Activated CD4-positive, alpha-beta T cell treated with anti-CD3 and anti-CD28 coated beads for 36 hours (primary cell): ENCODE measurements at regions of chr19 and their contacts with region 1.

Region 1: GRCh38 chr19:19663256-19664038 is at the start of gene ATP13A1:
- DNase-seq: peak; percentile 95
- ATAC-seq: peak; percentile 77
- H3K4me3 Mint-ChIP-seq: peak within 1 kb of the TSS; percentile 78
- H3K27ac Mint-ChIP-seq: peak within 1 kb of the TSS; percentile 98
- H3K4me1 Mint-ChIP-seq: peaks cover 35% of the 10 kb centered on the region
- H3K27me3 Mint-ChIP-seq: no peaks in the 10 kb centered on the region
- total RNA-seq, gene ATP13A1: 61.8 to 71.2 TPM

Region 2: GRCh38 chr19:19214892-19215291 is 448.6 kb before region 1 on chr19:
- CTCF ChIA-PET with region 1: no interaction called
- POLR2A ChIA-PET with region 1: no interaction called
- intact Hi-C with region 1: no loop called
- DNase-seq: peak; percentile 65
- ATAC-seq: peak; percentile 42
- H3K4me3 Mint-ChIP-seq: no peak overlapping the region
- H3K27ac Mint-ChIP-seq: no peak overlapping the region
- H3K4me1 Mint-ChIP-seq: peaks cover 2% of the 10 kb centered on the region
- H3K27me3 Mint-ChIP-seq: peaks cover 44% of the 10 kb centered on the region

Region 3: GRCh38 chr19:19404879-19405860 is 258.3 kb before region 1 on chr19 and contains the start of gene GATAD2A:
- CTCF ChIA-PET with region 1: no interaction called
- POLR2A ChIA-PET with region 1: no interaction called
- intact Hi-C with region 1: loop called in 1 of 2 experiments (anchors 5 kb)
- DNase-seq: peak; percentile 96
- ATAC-seq: peak; percentile 74
- H3K4me3 Mint-ChIP-seq: peak within 1 kb of the TSS; percentile 91
- H3K27ac Mint-ChIP-seq: peak within 1 kb of the TSS; percentile 95
- H3K4me1 Mint-ChIP-seq: peaks cover 69% of the 10 kb centered on the region
- H3K27me3 Mint-ChIP-seq: no peaks in the 10 kb centered on the region
- total RNA-seq, gene GATAD2A: 123 to 139 TPM

Region 4: GRCh38 chr19:19597809-19598306 is 65.6 kb before region 1 on chr19:
- CTCF ChIA-PET with region 1: no interaction called
- POLR2A ChIA-PET with region 1: no interaction called
- intact Hi-C with region 1: loop called (anchors 1 to 2 kb)
- DNase-seq: peak; percentile 70
- ATAC-seq: peak; percentile 66
- H3K4me3 Mint-ChIP-seq: peak overlapping the region; percentile 67
- H3K27ac Mint-ChIP-seq: peak overlapping the region; percentile 97
- H3K4me1 Mint-ChIP-seq: peaks cover 82% of the 10 kb centered on the region
- H3K27me3 Mint-ChIP-seq: no peaks in the 10 kb centered on the region

Region 5: GRCh38 chr19:19677579-19677978 is 14.1 kb after region 1 on chr19:
- CTCF ChIA-PET with region 1: no interaction called
- POLR2A ChIA-PET with region 1: no interaction called
- intact Hi-C with region 1: no loop called
- DNase-seq: no peak
- ATAC-seq: no peak
- H3K4me3 Mint-ChIP-seq: no peak overlapping the region
- H3K27ac Mint-ChIP-seq: peak overlapping the region; percentile 37
- H3K4me1 Mint-ChIP-seq: peaks cover 10% of the 10 kb centered on the region
- H3K27me3 Mint-ChIP-seq: no peaks in the 10 kb centered on the region

Region 6: DNA sequence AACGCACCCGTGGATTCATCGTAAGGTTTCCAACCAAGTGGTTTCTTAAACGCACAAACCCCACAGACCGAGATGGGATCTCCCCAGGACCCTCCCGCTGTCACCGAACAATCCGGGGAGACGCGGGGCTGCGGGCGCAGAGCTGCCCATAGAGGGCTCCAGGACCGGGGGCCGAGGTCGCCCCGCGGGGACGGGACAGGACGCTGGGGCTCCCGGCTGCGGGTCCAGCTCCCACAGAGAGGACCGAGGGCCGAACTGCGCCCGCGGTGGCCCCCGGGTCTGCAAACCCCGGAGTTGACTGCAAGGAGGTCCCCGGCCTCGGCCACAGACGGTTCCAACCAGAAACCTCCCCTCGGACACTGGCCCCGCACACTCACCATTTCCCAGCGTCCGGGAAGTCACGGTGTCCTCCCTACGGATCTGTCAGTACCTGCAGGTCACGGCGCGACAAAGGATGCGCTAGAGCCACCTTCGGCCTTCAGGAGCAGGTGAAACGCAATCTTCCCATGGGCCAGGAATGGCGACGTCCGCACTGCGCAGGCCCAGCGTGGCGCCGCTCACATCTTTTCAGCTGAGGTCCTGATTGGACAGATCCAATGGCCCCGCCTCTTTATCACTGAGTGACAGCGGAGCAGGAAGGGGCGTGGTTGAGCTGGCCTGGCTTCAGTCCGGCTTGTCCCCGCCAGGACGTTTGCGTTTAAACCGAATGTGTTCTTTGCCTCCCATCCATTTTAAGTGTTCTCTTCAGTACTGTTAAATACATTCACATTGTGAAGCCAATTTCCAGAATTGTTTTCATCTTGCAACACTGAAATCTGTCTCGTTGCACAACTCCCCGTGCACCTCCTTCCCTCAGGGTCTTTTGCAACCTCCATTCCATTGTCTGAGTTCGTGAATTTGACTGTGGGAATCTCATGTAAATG is 69.4 kb after region 1 on chr19 and contains the start of gene ZNF14:
- CTCF ChIA-PET with region 1: interaction called, 3 read pairs
- POLR2A ChIA-PET with region 1: interaction called, 6 read pairs
- intact Hi-C with region 1: loop called (anchors 1 to 2 kb)
- DNase-seq: peak; percentile 96
- ATAC-seq: peak; percentile 100
- H3K4me3 Mint-ChIP-seq: peak within 1 kb of the TSS; percentile 85
- H3K27ac Mint-ChIP-seq: peak within 1 kb of the TSS; percentile 87
- H3K4me1 Mint-ChIP-seq: peaks cover 20% of the 10 kb centered on the region
- H3K27me3 Mint-ChIP-seq: no peaks in the 10 kb centered on the region
- total RNA-seq, gene ZNF14: 9.2 TPM

Region 7: DNA sequence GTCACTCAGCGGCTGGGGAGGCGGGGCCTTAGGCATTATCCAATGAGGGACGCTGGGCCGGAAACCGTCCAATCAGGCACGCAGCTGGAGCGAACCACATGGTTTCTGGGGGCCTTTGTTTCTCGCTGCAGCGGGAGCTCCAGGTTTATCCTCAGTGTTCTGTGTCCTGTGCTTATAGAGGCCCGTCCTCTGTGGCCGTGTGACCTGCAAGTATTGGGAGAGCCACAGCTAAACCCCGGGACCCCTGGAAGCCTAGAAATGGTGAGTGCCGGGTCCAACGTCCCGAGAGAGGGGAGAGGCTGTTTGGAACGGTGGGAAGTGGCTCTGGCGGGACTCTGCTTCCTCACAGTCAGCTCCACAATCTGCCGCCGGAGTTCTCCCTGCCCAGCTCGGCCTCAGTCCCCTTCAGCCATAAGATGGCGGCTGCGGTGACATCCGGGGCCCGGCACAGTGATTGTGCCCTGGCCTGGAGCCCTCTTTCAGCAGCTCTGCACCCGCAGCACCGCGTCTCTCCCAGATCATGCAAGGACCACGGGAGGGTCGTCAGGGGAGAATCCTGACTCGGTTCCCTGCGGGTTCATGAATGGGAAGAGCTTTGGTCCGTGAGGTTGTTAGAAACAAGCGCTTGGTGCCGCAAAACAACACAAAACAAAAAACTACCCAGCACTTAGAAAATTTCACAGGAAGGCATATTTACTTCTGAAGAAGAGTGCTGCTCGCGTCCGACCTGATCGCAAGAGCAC is 202.5 kb after region 1 on chr19 and contains the start of gene ZNF253:
- CTCF ChIA-PET with region 1: no interaction called
- POLR2A ChIA-PET with region 1: interaction called, 8 read pairs
- intact Hi-C with region 1: loop called (anchors 1 to 2 kb)
- DNase-seq: peak; percentile 98
- ATAC-seq: peak; percentile 93
- H3K4me3 Mint-ChIP-seq: peak within 1 kb of the TSS; percentile 88
- H3K27ac Mint-ChIP-seq: peak within 1 kb of the TSS; percentile 98
- H3K4me1 Mint-ChIP-seq: peaks cover 21% of the 10 kb centered on the region
- H3K27me3 Mint-ChIP-seq: no peaks in the 10 kb centered on the region
- total RNA-seq, gene ZNF253: 16.1 to 25.1 TPM

Region 8: GRCh38 chr19:20077791-20078463 is 414.5 kb after region 1 on chr19 and contains the start of gene ZNF90:
- CTCF ChIA-PET with region 1: no interaction called
- POLR2A ChIA-PET with region 1: no interaction called
- intact Hi-C with region 1: loop called in 1 of 2 experiments (anchors 1 kb)
- DNase-seq: peak; percentile 96
- ATAC-seq: peak; percentile 100
- H3K4me3 Mint-ChIP-seq: peak within 1 kb of the TSS; percentile 97
- H3K27ac Mint-ChIP-seq: peak within 1 kb of the TSS; percentile 73
- H3K4me1 Mint-ChIP-seq: peaks cover 11% of the 10 kb centered on the region
- H3K27me3 Mint-ChIP-seq: no peaks in the 10 kb centered on the region
- total RNA-seq, gene ZNF90: 21.6 to 22.9 TPM

Region 9: DNA sequence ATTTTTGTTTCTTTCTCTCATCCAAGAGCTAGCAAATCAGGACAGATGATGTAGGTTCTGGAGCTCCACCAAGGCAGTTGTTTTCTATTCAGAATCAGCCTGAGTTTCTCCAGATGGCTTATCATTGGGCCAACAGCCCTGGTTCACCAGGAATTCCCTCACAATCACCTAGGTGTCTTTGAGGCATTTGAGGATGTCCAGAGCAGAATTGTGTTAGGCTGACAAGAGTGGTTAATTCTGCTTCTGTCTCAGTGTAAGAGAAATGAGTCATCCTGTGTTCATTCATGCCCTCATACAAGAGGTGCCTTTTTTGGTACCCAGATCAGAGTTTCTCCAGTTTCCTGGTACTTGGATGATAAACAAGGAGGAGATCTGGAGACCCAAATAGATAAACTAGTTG is 516.5 kb after region 1 on chr19:
- CTCF ChIA-PET with region 1: no interaction called
- POLR2A ChIA-PET with region 1: no interaction called
- intact Hi-C with region 1: no loop called
- DNase-seq: no peak
- ATAC-seq: no peak
- H3K4me3 Mint-ChIP-seq: no peak overlapping the region
- H3K27ac Mint-ChIP-seq: no peak overlapping the region
- H3K4me1 Mint-ChIP-seq: peaks cover 4% of the 10 kb centered on the region
- H3K27me3 Mint-ChIP-seq: no peaks in the 10 kb centered on the region